CD4-positive, alpha-beta T cell (primary cell): ENCODE measurements at regions of chr6 and their contacts with region 1.

Region 1: DNA sequence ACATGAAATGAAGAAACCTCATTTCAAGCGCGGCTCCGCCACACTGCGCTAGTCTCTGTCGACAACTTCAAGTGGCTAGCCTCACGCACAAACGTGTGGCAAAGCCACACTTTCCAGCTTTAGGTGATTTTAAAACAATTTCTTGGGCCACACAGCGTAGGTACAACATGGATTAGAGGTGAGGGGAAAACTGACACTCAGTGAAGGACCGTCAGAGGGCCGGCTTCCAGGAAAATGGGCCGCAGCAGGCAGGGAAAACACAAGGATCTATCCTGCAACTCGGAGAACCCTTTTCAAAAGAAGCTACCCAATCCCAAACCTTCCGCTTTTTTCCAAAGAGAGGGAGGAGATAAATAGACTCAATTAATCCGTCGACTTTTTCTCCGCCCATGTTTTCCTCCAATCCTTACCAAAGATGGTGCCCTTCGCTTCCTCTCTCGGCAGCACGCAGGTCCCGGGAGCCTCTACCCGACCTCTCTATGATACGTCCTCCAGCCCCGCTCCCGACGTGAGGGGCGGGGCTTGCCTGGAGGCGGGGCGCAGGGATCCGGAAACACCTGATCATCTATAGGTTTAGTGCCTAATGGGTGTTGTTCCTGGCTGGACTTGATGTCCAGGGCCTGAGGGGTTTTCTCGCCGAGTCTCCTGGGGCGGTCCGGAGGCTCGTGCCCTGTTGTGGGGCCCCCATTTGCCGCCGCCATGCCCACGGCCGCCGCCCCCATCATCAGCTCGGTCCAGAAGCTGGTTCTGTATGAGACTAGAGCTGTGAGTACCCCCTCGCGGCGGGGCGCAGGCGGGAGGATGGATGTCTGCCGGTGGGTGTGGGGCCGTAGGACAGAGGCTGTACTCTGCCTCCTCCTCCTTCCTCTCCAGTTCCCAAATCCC is at the starts of genes AK9 and FIG4:
- DNase-seq: peak; percentile 76 to 94 (median 88)
- ATAC-seq: peak; percentile 96
- H3K4me3 ChIP-seq: peak within 1 kb of the TSS; percentile 88
- H3K4me3 Mint-ChIP-seq: peak within 1 kb of the TSS; percentile 96
- H3K27ac ChIP-seq: peak within 1 kb of the TSS; percentile 59 to 71
- H3K27ac Mint-ChIP-seq: peak within 1 kb of the TSS; percentile 95
- H3K4me1 ChIP-seq: peaks cover 13% of the 10 kb centered on the region
- H3K4me1 Mint-ChIP-seq: peaks cover 34% of the 10 kb centered on the region
- H3K27me3 ChIP-seq: no peaks in the 10 kb centered on the region
- H3K27me3 Mint-ChIP-seq: no peaks in the 10 kb centered on the region
- CTCF ChIP-seq: peak; percentile 27
- total RNA-seq, gene AK9: 5.3 to 6.6 TPM
- total RNA-seq, gene FIG4: 3.3 to 4.0 TPM

Region 2: GRCh38 chr6:108294727-108295625 is 1396.0 kb before region 1 on chr6 and contains the start of gene AFG1L:
- CTCF ChIA-PET with region 1: no interaction called
- POLR2A ChIA-PET with region 1: no interaction called
- intact Hi-C with region 1: loop called in 1 of 2 experiments (anchors 10 kb)
- DNase-seq: peak; percentile 77 to 90 (median 83)
- ATAC-seq: peak; percentile 89
- H3K4me3 ChIP-seq: peak within 1 kb of the TSS; percentile 91
- H3K4me3 Mint-ChIP-seq: peak within 1 kb of the TSS; percentile 97
- H3K27ac ChIP-seq: peak within 1 kb of the TSS; percentile 93 to 95
- H3K27ac Mint-ChIP-seq: peak within 1 kb of the TSS; percentile 96
- H3K4me1 ChIP-seq: peaks cover 17% of the 10 kb centered on the region
- H3K4me1 Mint-ChIP-seq: peaks cover 30% of the 10 kb centered on the region
- H3K27me3 ChIP-seq: no peaks in the 10 kb centered on the region
- H3K27me3 Mint-ChIP-seq: no peaks in the 10 kb centered on the region
- CTCF ChIP-seq: no peak
- total RNA-seq, gene AFG1L: 3.0 to 3.9 TPM

Region 3: GRCh38 chr6:109187399-109188114 is 503.4 kb before region 1 on chr6:
- CTCF ChIA-PET with region 1: no interaction called
- POLR2A ChIA-PET with region 1: no interaction called
- intact Hi-C with region 1: loop called (anchors 5 kb)
- DNase-seq: peak; percentile 35 to 79 (median 57)
- ATAC-seq: peak; percentile 93
- H3K4me3 ChIP-seq: no peak overlapping the region
- H3K4me3 Mint-ChIP-seq: no peak overlapping the region
- H3K27ac ChIP-seq: no peak overlapping the region
- H3K27ac Mint-ChIP-seq: no peak overlapping the region
- H3K4me1 ChIP-seq: no peaks in the 10 kb centered on the region
- H3K4me1 Mint-ChIP-seq: no peaks in the 10 kb centered on the region
- H3K27me3 ChIP-seq: peaks cover 0 to 15% of the 10 kb centered on the region in 2 experiments
- H3K27me3 Mint-ChIP-seq: peaks cover 22% of the 10 kb centered on the region
- CTCF ChIP-seq: peak; percentile 95

Region 4: GRCh38 chr6:109482905-109483735 is 207.9 kb before region 1 on chr6 and contains the start of gene ZBTB24:
- CTCF ChIA-PET with region 1: no interaction called
- POLR2A ChIA-PET with region 1: no interaction called
- intact Hi-C with region 1: loop called in 1 of 2 experiments (anchors 2 kb)
- DNase-seq: peak; percentile 78 to 97 (median 88)
- ATAC-seq: peak; percentile 87
- H3K4me3 ChIP-seq: peak within 1 kb of the TSS; percentile 85
- H3K4me3 Mint-ChIP-seq: peak within 1 kb of the TSS; percentile 96
- H3K27ac ChIP-seq: peak within 1 kb of the TSS; percentile 68 to 77
- H3K27ac Mint-ChIP-seq: peak within 1 kb of the TSS; percentile 79
- H3K4me1 ChIP-seq: peaks cover 36% of the 10 kb centered on the region
- H3K4me1 Mint-ChIP-seq: peaks cover 55% of the 10 kb centered on the region
- H3K27me3 ChIP-seq: no peaks in the 10 kb centered on the region
- H3K27me3 Mint-ChIP-seq: no peaks in the 10 kb centered on the region
- CTCF ChIP-seq: no peak
- total RNA-seq, gene ZBTB24: 10.4 to 10.5 TPM

Region 5: GRCh38 chr6:109595998-109596397 is 95.0 kb before region 1 on chr6:
- CTCF ChIA-PET with region 1: no interaction called
- POLR2A ChIA-PET with region 1: interaction called, 3 read pairs
- intact Hi-C with region 1: loop called (anchors 2 to 5 kb)
- DNase-seq: peak in 5 of 14 experiments; percentile 7 to 45 (median 17)
- ATAC-seq: peak; percentile 82
- H3K4me3 ChIP-seq: no peak overlapping the region
- H3K4me3 Mint-ChIP-seq: no peak overlapping the region
- H3K27ac ChIP-seq: no peak overlapping the region
- H3K27ac Mint-ChIP-seq: no peak overlapping the region
- H3K4me1 ChIP-seq: no peaks in the 10 kb centered on the region
- H3K4me1 Mint-ChIP-seq: peaks cover 12% of the 10 kb centered on the region
- H3K27me3 ChIP-seq: no peaks in the 10 kb centered on the region
- H3K27me3 Mint-ChIP-seq: no peaks in the 10 kb centered on the region
- CTCF ChIP-seq: peak; percentile 45

Region 6: GRCh38 chr6:109713097-109713496 is 22.1 kb after region 1 on chr6:
- CTCF ChIA-PET with region 1: no interaction called
- POLR2A ChIA-PET with region 1: no interaction called
- intact Hi-C with region 1: no loop called
- DNase-seq: no peak
- ATAC-seq: no peak
- H3K4me3 ChIP-seq: no peak overlapping the region
- H3K4me3 Mint-ChIP-seq: no peak overlapping the region
- H3K27ac ChIP-seq: no peak overlapping the region
- H3K27ac Mint-ChIP-seq: no peak overlapping the region
- H3K4me1 ChIP-seq: no peaks in the 10 kb centered on the region
- H3K4me1 Mint-ChIP-seq: peaks cover 9% of the 10 kb centered on the region
- H3K27me3 ChIP-seq: no peaks in the 10 kb centered on the region
- H3K27me3 Mint-ChIP-seq: no peaks in the 10 kb centered on the region
- CTCF ChIP-seq: no peak

Region 7: DNA sequence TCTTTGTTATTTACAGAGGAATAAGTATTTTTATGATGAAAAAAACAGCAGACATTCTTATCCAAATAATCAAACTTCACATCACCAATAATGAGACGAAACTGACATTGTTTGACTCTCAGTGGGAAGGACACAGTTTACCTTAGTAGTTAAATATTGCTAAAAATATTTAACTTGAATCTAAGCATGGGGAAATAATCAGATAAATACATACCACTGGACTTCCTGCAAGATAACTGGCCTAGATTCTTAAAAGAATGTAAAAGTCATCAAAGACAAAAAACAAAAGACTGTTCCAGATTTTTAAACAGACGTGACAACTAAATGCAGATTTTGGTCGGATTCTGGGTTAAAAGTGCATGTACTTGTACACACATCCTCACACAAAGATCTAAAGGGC is 36.6 kb after region 1 on chr6:
- CTCF ChIA-PET with region 1: no interaction called
- POLR2A ChIA-PET with region 1: no interaction called
- intact Hi-C with region 1: no loop called
- DNase-seq: no peak
- ATAC-seq: no peak
- H3K4me3 ChIP-seq: no peak overlapping the region
- H3K4me3 Mint-ChIP-seq: no peak overlapping the region
- H3K27ac ChIP-seq: no peak overlapping the region
- H3K27ac Mint-ChIP-seq: no peak overlapping the region
- H3K4me1 ChIP-seq: no peaks in the 10 kb centered on the region
- H3K4me1 Mint-ChIP-seq: no peaks in the 10 kb centered on the region
- H3K27me3 ChIP-seq: no peaks in the 10 kb centered on the region
- H3K27me3 Mint-ChIP-seq: no peaks in the 10 kb centered on the region
- CTCF ChIP-seq: no peak

Region 8: GRCh38 chr6:110179401-110180227 is 488.6 kb after region 1 on chr6 and contains the start of gene WASF1:
- CTCF ChIA-PET with region 1: no interaction called
- POLR2A ChIA-PET with region 1: interaction called, 12 read pairs
- intact Hi-C with region 1: loop called in 1 of 2 experiments (anchors 5 kb)
- DNase-seq: peak; percentile 78 to 96 (median 86)
- ATAC-seq: peak; percentile 89
- H3K4me3 ChIP-seq: peak within 1 kb of the TSS; percentile 95
- H3K4me3 Mint-ChIP-seq: peak within 1 kb of the TSS; percentile 84
- H3K27ac ChIP-seq: peak within 1 kb of the TSS; percentile 74 to 78
- H3K27ac Mint-ChIP-seq: peak within 1 kb of the TSS; percentile 16
- H3K4me1 ChIP-seq: peaks cover 28% of the 10 kb centered on the region
- H3K4me1 Mint-ChIP-seq: peaks cover 12% of the 10 kb centered on the region
- H3K27me3 ChIP-seq: peaks cover 0 to 9% of the 10 kb centered on the region in 2 experiments
- H3K27me3 Mint-ChIP-seq: peaks cover 10% of the 10 kb centered on the region
- CTCF ChIP-seq: no peak
- total RNA-seq, gene WASF1: 0.19 to 0.22 TPM